ENCODE measurements at regions of chr1 and their contacts with region 1.

Region 1: DNA sequence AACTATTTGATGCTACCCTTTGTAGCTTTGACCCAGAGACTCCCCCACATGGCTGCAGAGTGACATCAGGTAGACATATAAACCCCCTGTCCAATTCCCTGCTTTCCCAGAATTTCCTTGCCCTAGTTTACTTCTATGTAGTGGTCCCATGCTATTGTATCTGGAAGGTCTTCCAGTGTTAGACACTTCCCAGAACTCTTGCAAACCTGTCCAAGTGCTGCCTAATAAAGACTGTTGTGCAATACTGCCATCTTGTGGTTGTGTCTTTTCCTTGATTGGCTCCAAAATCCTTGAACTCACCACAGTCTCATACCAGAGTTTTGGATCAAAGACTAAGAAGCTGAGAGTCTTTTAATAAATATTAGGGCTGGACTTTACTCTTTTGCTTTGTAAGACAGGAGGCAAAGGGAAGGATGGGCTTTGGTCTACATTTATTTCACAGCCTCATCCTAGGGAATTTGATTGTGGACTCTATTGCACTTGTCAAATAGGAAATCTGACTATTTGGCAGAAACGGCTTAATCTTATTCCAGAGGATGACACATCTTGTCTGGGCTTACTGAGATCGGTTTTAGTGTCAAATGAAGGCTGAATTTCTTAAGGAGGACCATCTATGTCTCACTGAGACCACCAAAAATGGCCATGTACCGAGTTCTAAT is 169.9 kb downstream of the LRRC7 start:
- DNase-seq: peak in 1 of 2 donors; percentile 59
- ATAC-seq: no peak
- H3K4me3 ChIP-seq: no peak overlapping the region
- H3K4me3 Mint-ChIP-seq: no peak overlapping the region
- H3K27ac ChIP-seq: no peak overlapping the region
- H3K27ac Mint-ChIP-seq: no peak overlapping the region
- H3K4me1 ChIP-seq: no peaks in the 10 kb centered on the region
- H3K4me1 Mint-ChIP-seq: no peaks in the 10 kb centered on the region
- H3K27me3 ChIP-seq: no peaks in the 10 kb centered on the region
- H3K27me3 Mint-ChIP-seq: no peaks in the 10 kb centered on the region
- CTCF ChIP-seq: peak; percentile 11

Region 2: GRCh38 chr1:68116643-68117235 is 1620.9 kb before region 1 on chr1:
- intact Hi-C with region 1: loop called (anchors 5 kb)
- DNase-seq: peak in 1 of 2 donors; percentile 64
- ATAC-seq: peak in 2 of 3 donors; percentile 40 to 60
- H3K4me3 ChIP-seq: no peak overlapping the region
- H3K4me3 Mint-ChIP-seq: peak overlapping the region; percentile 51
- H3K27ac ChIP-seq: no peak overlapping the region
- H3K27ac Mint-ChIP-seq: no peak overlapping the region
- H3K4me1 ChIP-seq: peaks cover 3% of the 10 kb centered on the region
- H3K4me1 Mint-ChIP-seq: peaks cover 0 to 6% of the 10 kb centered on the region in 2 donors
- H3K27me3 ChIP-seq: no peaks in the 10 kb centered on the region
- H3K27me3 Mint-ChIP-seq: peaks cover 5 to 10% of the 10 kb centered on the region in 2 donors
- CTCF ChIP-seq: peak; percentile 81

Measured in natural killer cell (primary cell).